ENCODE measurements at regions of chr3 and their contacts with region 1.

Region 1: GRCh38 chr3:44814751-44815150 is 47.0 kb upstream of the TMEM42 start:
- DNase-seq: no peak
- H3K4me3 ChIP-seq: no peak overlapping the region
- H3K27ac ChIP-seq: no peak overlapping the region
- H3K4me1 ChIP-seq: no peaks in the 10 kb centered on the region
- H3K27me3 ChIP-seq: no peaks in the 10 kb centered on the region
- CTCF ChIP-seq: no peak

Region 2: GRCh38 chr3:44795197-44795596 is 19.6 kb before region 1 on chr3:
- CTCF ChIA-PET with region 1: no interaction called
- POLR2A ChIA-PET with region 1: interaction called, 23 read pairs
- intact Hi-C with region 1: no loop called
- DNase-seq: no peak
- H3K4me3 ChIP-seq: no peak overlapping the region
- H3K27ac ChIP-seq: no peak overlapping the region
- H3K4me1 ChIP-seq: no peaks in the 10 kb centered on the region
- H3K27me3 ChIP-seq: no peaks in the 10 kb centered on the region
- CTCF ChIP-seq: no peak